ENCODE measurements at regions of chr14 and their contacts with region 1.

Region 1: DNA sequence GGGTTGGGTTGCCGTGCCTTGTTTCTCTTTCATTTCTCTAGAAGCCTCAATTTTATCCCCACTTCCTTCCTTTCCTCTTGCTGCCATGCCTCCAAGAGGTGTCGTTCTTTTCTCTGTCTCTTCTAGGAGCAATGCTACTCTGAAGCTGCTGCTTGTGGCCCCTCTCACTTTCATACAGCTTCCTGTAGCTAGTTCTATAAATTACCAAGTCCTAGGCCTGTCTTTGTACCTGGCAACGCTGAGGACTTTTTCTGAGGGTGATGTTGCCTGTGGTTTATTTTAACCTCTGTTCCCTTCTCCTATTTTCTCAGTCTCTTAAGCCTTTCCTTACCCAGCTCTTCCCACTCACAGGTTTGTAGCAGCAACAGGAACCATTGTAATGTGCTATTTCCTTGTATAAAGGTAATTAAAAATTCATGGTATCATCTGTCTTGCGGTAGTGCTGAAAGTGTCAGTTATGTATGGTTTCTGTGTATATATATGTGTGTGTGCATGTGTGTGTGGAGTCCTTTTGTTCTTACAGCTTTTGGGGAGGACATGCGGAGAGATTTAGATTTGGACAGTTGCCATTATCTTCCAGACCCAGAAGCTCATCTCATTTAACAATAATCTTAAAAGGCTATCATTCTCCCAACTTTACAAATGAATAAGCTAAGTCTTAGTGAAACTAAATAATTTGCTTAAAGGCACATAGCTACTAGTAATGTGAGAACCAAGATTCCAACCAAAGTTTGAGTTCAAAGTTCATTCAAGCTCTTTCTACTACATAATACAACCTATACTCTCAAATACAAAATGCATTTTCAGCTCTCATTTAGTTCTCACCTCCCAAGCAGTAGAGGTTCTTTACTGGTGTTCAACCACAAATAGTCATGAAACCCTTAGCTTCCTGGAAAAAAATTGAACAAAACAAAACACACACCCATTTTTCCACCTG is 43.8 kb downstream of the DDHD1 start:
- DNase-seq: peak; percentile 82
- H3K4me3 Mint-ChIP-seq: no peak overlapping the region
- H3K27ac Mint-ChIP-seq: no peak overlapping the region
- H3K4me1 Mint-ChIP-seq: peaks cover 38% of the 10 kb centered on the region
- H3K27me3 Mint-ChIP-seq: no peaks in the 10 kb centered on the region

Region 2: GRCh38 chr14:53152890-53153701 is 43.7 kb after region 1 on chr14 and contains the start of gene DDHD1:
- CTCF ChIA-PET with region 1: interaction called, 33 read pairs
- POLR2A ChIA-PET with region 1: interaction called, 11 read pairs
- DNase-seq: peak; percentile 79
- H3K4me3 Mint-ChIP-seq: peak within 1 kb of the TSS; percentile 99
- H3K27ac Mint-ChIP-seq: peak within 1 kb of the TSS; percentile 97
- H3K4me1 Mint-ChIP-seq: peaks cover 39% of the 10 kb centered on the region
- H3K27me3 Mint-ChIP-seq: no peaks in the 10 kb centered on the region
- total RNA-seq, gene DDHD1: 53.8 to 58.0 TPM